GM12878 (cell line): ENCODE measurements at regions of chr11 and their contacts with region 1.

Region 1: DNA sequence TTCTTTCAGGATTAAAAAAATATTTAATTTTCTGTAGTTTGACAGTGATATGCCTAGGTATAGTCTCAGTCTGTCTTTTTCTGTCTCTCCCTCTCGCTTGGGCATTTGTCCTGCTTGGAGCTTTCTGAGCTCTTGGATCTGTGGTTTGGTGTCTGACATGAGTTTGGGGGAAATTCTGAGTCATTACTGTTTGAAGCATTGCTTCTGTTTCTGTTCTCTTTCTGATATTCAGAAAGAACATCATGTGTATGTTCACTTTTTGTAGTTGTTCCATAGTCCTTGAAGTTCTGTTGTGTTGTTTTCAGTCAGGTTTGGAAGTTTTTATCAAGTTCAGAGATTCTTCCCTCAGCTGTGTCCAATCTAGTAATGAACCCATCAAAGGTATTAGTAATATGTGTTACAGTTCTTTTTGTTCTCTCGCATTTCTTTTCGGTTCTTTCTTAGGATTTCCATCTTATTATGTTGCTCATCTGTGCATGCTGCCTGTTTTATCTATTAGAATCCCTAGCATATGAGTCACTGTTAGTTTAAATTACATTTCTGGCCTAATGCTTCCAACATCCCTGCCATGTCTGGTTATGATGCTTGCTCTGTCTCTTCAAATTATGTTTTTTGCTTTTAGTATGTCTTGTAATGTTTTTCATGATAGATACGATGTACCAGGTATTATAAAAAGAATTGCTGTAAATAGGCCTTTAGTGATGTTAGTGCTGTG is 48.4 kb downstream of the DDX10 start:
- DNase-seq: peak; percentile 54
- ATAC-seq: peak; percentile 80
- H3K4me3 ChIP-seq: peak overlapping the region; percentile 19; the same call in 1 of the 2 replicates
- H3K27ac ChIP-seq: peak overlapping the region; percentile 62
- H3K4me1 ChIP-seq: peaks cover 8% of the 10 kb centered on the region; the same call in 1 of the 2 replicates
- H3K27me3 ChIP-seq: no peaks in the 10 kb centered on the region
- CTCF ChIP-seq: no peak
- EP300 ChIP-seq: no peak; a peak in 1 of 4 replicates
- POLR2A ChIP-seq: no peak
- RAD21 ChIP-seq: 0 out of 2 replicates have a peak, but pooled peaks have one; percentile 2

Region 2: DNA sequence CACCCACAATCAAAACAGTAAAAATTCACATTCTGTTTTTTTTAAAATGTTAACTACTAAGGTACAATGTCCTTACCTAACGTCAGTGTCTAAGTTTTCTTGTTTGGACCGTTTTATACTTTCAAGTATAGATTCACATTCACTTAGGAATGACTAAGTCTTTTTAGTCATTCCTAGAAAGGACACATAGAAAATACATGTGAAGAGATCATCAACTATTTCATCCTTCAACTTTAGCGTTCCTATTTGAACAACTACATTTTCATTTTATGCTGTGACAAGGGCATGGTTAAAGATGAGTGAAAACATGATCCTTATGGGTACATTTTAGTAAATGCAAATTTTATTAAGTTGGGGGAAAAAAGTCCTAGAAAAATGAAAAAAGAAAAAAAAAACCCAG is 14.4 kb after region 1 on chr11:
- CTCF ChIA-PET with region 1: interaction called, 31 read pairs
- POLR2A ChIA-PET with region 1: interaction called, 4 read pairs
- RAD21 ChIA-PET with region 1: interaction called, 18 read pairs
- SMC1A ChIA-PET with region 1: interaction called, 51 read pairs
- in situ Hi-C with region 1: no loop called
- intact Hi-C with region 1: loop called (anchors 2 kb)
- DNase-seq: no peak
- ATAC-seq: peak; percentile 67
- H3K4me3 ChIP-seq: peak overlapping the region; percentile 43
- H3K27ac ChIP-seq: peak overlapping the region; percentile 86
- H3K4me1 ChIP-seq: peaks cover 11% of the 10 kb centered on the region; the same call in 1 of the 2 replicates
- H3K27me3 ChIP-seq: no peaks in the 10 kb centered on the region
- CTCF ChIP-seq: no peak
- EP300 ChIP-seq: no peak
- POLR2A ChIP-seq: no peak
- RAD21 ChIP-seq: 0 out of 2 replicates have a peak, but pooled peaks have one; percentile 5